Naive thymus-derived CD4-positive, alpha-beta T cell (primary cell): ENCODE measurements at regions of chr6 and their contacts with region 1.

Region 1: DNA sequence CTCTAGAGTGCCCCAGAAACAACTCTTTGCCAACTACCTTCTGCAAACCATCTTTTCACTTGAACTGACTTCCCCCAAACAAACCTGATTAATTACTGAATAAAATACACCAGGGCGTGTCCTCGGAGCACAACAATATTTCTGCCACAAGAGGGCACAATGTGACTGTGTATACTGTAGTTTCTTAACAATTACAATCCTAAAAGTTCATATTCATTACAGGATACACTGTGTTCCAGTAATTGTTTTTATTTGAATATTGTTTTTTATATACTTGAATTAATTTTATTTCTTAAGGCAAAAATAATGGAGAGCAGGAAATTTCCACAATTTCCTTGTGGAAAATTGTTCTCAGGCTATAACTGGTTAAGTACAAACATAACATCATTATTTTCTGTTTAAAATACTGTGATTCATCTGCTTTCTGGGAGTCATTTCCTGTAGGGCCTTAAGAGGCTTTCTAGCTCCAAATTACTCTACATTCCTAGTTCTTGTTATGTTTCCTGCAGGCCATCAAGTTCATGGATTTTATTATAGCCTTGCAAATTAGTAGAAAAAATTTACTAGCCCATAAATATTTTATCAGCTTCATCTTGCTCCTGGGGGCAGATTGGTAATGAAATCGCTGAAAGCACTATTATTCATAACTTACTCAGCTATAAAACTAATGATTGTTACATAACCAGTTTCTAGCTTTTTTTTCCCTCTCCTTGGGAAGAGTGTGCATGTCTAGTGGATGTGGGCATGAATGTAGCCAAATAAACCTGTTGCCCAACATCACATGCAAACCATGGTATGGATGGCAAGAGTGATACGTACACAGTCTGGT is 51.9 kb upstream of the SLC22A16 start:
- DNase-seq: peak in 7 of 9 donors; percentile 15 to 61 (median 47)
- ATAC-seq: peak; percentile 83
- H3K4me3 ChIP-seq: no peak overlapping the region
- H3K4me3 Mint-ChIP-seq: no peak overlapping the region
- H3K27ac ChIP-seq: no peak overlapping the region
- H3K27ac Mint-ChIP-seq: peak overlapping the region in 1 of 9 donors; percentile 21
- H3K4me1 ChIP-seq: no peaks in the 10 kb centered on the region
- H3K4me1 Mint-ChIP-seq: peaks cover 0 to 10% (median 0%) of the 10 kb centered on the region in 7 donors
- H3K27me3 ChIP-seq: no peaks in the 10 kb centered on the region
- H3K27me3 Mint-ChIP-seq: peaks cover 0 to 11% (median 0%) of the 10 kb centered on the region in 5 donors

Region 2: DNA sequence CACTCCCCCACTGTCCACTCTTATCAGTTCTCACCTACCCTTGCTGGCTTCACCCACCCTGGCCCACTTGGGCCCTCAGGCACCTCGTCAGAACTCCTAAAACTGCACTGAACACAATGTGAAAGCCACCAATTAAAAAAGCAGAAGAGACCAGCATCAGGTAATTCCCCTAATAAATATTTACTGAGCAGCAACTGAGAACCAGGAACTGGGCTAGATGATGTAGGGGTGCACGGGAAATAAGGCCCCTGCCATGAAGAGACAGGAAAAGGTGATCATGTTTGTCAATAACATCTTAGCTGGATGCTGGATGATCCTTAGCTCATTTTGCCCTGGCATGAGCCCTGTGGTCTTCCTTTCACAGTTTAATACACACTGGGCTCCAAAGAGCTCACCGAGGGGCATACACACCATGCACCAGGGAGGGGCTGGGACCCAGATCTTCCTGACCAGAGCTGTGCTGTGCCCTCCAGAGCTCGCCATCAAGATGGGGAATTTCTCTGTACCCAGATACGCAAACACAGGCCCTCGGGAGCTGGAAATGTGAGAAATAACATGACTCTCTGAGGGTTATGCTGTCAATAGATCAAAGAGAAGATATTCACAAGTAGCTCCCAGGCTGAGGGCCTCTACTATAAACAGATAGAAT is 61.7 kb after region 1 on chr6:
- CTCF ChIA-PET with region 1: no interaction called
- POLR2A ChIA-PET with region 1: no interaction called
- intact Hi-C with region 1: no loop called
- DNase-seq: no peak
- ATAC-seq: peak; percentile 62
- H3K4me3 ChIP-seq: no peak overlapping the region
- H3K4me3 Mint-ChIP-seq: no peak overlapping the region
- H3K27ac ChIP-seq: no peak overlapping the region
- H3K27ac Mint-ChIP-seq: peak overlapping the region in 2 of 9 donors; percentile 1 to 63
- H3K4me1 ChIP-seq: no peaks in the 10 kb centered on the region
- H3K4me1 Mint-ChIP-seq: peaks cover 0 to 11% (median 0%) of the 10 kb centered on the region in 7 donors
- H3K27me3 ChIP-seq: no peaks in the 10 kb centered on the region
- H3K27me3 Mint-ChIP-seq: peaks cover 0 to 4% (median 0%) of the 10 kb centered on the region in 5 donors

Region 3: GRCh38 chr6:110949679-110950285 is 421.5 kb after region 1 on chr6:
- CTCF ChIA-PET with region 1: interaction called, 5 read pairs
- POLR2A ChIA-PET with region 1: no interaction called
- intact Hi-C with region 1: loop called (anchors 1 kb)
- DNase-seq: peak in 7 of 9 donors; percentile 17 to 64 (median 50)
- ATAC-seq: peak; percentile 52
- H3K4me3 ChIP-seq: no peak overlapping the region
- H3K4me3 Mint-ChIP-seq: no peak overlapping the region
- H3K27ac ChIP-seq: no peak overlapping the region
- H3K27ac Mint-ChIP-seq: no peak overlapping the region
- H3K4me1 ChIP-seq: no peaks in the 10 kb centered on the region
- H3K4me1 Mint-ChIP-seq: peaks cover 0 to 8% (median 0%) of the 10 kb centered on the region in 7 donors
- H3K27me3 ChIP-seq: no peaks in the 10 kb centered on the region
- H3K27me3 Mint-ChIP-seq: peaks cover 0 to 12% (median 6%) of the 10 kb centered on the region in 5 donors

Region 4: GRCh38 chr6:110999634-111000270 is 471.4 kb after region 1 on chr6:
- CTCF ChIA-PET with region 1: no interaction called
- POLR2A ChIA-PET with region 1: no interaction called
- intact Hi-C with region 1: loop called (anchors 1 to 5 kb)
- DNase-seq: peak in 5 of 9 donors; percentile 15 to 39 (median 25)
- ATAC-seq: peak; percentile 46
- H3K4me3 ChIP-seq: no peak overlapping the region
- H3K4me3 Mint-ChIP-seq: no peak overlapping the region
- H3K27ac ChIP-seq: no peak overlapping the region
- H3K27ac Mint-ChIP-seq: peak overlapping the region in 1 of 9 donors; percentile 56
- H3K4me1 ChIP-seq: no peaks in the 10 kb centered on the region
- H3K4me1 Mint-ChIP-seq: peaks cover 0 to 8% (median 2%) of the 10 kb centered on the region in 7 donors
- H3K27me3 ChIP-seq: no peaks in the 10 kb centered on the region
- H3K27me3 Mint-ChIP-seq: no peaks in the 10 kb centered on the region

Region 5: DNA sequence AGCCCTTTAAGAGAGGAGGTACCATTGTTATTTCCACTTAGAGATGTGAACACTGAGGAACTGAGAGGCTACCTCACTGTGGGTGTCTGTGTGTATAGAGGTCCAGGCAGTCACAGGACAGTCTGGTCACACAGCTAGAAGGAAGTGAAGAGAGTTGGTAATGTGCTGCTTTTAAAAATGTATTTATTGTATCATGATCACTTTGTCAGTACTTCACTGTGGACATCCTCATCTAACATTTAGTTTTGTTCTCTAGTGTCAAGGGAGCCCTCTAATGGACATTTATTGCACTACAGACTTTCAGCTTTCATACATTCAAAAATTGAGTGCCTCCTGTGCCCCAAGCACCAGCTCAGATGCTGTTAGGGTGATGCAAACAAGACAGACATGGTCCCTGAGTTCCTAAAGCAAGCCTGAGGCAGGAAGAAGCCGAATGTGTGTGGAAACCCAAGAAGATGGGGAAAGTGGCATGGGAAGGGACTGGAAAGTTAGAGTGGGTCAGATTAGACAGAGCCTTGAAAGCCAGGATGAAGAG is 681.9 kb after region 1 on chr6:
- CTCF ChIA-PET with region 1: no interaction called
- POLR2A ChIA-PET with region 1: no interaction called
- intact Hi-C with region 1: loop called (anchors 1 kb)
- DNase-seq: peak in 7 of 9 donors; percentile 46 to 73 (median 63)
- ATAC-seq: peak; percentile 88
- H3K4me3 ChIP-seq: no peak overlapping the region
- H3K4me3 Mint-ChIP-seq: no peak overlapping the region
- H3K27ac ChIP-seq: no peak overlapping the region
- H3K27ac Mint-ChIP-seq: peak overlapping the region in 1 of 9 donors; percentile 8
- H3K4me1 ChIP-seq: no peaks in the 10 kb centered on the region
- H3K4me1 Mint-ChIP-seq: peaks cover 0 to 18% (median 9%) of the 10 kb centered on the region in 7 donors
- H3K27me3 ChIP-seq: no peaks in the 10 kb centered on the region
- H3K27me3 Mint-ChIP-seq: no peaks in the 10 kb centered on the region